ENCODE measurements at regions of chr3 and their contacts with region 1.

Region 1: DNA sequence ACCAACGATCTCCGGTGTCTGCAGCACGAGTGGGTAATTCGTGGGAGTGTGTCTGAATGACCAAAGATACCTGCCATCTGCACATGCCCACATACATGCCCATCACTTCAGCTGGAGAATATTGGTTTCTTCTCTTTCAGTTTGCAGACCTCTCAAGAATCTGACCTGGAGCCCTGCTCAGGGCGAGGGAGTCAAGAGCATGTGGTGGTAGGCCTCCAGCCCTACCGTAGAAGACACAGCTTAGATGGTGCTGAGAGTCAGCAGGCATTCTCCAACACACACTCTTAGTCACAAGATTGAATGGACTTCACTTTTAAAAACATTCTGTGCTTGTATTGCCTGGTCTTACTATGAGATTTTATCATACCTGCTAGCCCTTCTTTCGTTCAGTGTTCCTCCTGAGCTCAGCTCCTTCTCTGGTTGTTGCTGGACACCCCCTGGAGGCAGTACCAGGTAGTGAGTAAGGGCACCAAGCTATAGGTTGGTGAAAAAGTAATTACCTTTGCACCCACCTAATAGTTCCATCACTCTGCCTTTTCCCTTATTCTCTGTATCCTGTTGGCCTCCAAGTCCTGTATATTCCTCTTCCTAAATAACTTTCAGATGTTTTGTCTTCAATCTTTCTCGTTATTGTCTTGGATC is 252.0 kb downstream of the CACNA2D3 start:
- DNase-seq: no peak
- H3K4me3 ChIP-seq: no peak overlapping the region
- CTCF ChIP-seq: peak; percentile 15

Region 2: DNA sequence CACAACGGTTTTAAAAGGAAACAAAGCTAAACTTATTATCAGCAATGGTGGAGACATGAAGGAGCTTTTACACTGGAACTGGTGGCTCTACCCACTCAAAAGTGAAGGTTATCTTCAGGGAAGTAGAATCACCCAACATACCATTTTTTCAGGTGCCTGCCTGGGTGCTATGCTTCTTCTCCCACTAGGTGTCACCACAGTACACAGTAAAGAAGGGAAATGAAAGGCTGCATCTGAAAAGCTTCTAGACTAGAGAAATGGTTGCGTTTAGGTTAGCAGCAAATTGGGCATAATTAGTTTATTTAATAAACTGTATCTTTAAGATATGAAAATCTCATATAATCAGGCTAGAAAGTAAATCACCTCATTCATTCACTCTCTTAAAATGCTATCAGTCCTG is 435.7 kb before region 1 on chr3:
- CTCF ChIA-PET with region 1: interaction called, 13 read pairs
- POLR2A ChIA-PET with region 1: no interaction called
- DNase-seq: no peak
- H3K4me3 ChIP-seq: no peak overlapping the region
- CTCF ChIP-seq: peak; percentile 73

Region 3: GRCh38 chr3:54393150-54393549 is 18.8 kb after region 1 on chr3:
- CTCF ChIA-PET with region 1: no interaction called
- POLR2A ChIA-PET with region 1: no interaction called
- DNase-seq: no peak
- H3K4me3 ChIP-seq: no peak overlapping the region
- CTCF ChIP-seq: no peak

Measured in AG04449 (cell line).